Activated T-helper 1 cell treated with anti-CD3 and anti-CD28 coated beads, Interleukin-12 subunit alpha, Interleukin-12 subunit beta, Interleukin-2, Interleukin-4 antibody, amounts not matched to agents 30 ng/mL and 10 ng/mL and 1 ng/mL, durations not matched to agents 14 hours and 24 hours and 36 hours (primary cell): ENCODE measurements at regions of chrX and their contacts with region 1.

Region 1: DNA sequence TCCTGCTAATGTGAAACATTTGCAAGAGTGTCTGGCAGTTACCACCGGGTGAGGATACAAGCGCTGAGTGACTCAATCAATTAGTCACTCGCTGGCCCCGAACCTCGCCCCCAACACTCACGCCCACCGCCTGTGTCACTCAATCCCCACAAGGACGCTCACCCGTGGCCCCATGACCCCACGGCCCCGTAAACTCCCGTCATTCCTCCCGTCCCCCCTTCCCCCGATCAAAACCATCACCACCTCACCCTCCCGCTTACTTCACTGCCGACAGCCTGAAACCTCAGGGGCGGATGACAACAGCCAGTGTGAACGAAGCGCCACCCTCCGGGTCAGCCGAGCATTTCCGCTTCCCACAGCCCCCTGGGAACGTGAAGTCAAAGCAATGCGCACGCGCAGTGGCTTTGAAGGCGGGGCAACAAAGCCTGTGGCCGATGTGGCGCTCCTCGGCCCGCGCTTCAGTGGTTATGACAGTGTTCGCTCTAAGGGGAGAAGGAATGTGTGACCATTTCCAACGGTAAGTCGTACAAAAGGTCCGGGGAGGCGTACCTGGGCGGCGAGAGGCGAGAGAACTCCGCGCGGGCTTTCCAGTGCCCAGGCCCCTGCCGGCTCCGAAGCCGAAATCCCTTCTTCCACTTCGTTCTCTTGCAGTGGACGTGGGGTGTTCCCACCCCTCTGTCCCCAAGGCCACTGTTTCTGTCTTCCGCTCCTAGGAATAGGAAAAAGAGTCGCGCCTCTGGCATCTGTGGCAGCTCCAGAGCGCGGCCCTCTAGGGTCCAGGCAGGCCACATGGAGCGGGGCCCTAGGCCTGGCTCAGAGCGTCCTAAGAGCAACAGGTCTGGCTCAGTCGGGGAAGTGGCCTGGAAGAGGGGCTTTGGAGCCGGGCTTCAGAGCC is at the start of gene ZNF674:
- DNase-seq: peak; percentile 90
- H3K4me3 Mint-ChIP-seq: peak within 1 kb of the TSS; percentile 97
- H3K27ac Mint-ChIP-seq: peak within 1 kb of the TSS; percentile 97
- H3K4me1 Mint-ChIP-seq: peaks cover 36% of the 10 kb centered on the region
- H3K27me3 Mint-ChIP-seq: no peaks in the 10 kb centered on the region
- total RNA-seq, gene ZNF674: 1.8 and 3.5 TPM in 2 replicates

Region 2: GRCh38 chrX:46446727-46447378 is 98.5 kb before region 1 on chrX:
- intact Hi-C with region 1: loop called (anchors 1 kb)
- DNase-seq: peak; percentile 76
- H3K4me3 Mint-ChIP-seq: peak overlapping the region; percentile 84
- H3K27ac Mint-ChIP-seq: peak overlapping the region; percentile 92
- H3K4me1 Mint-ChIP-seq: peaks cover 25% of the 10 kb centered on the region
- H3K27me3 Mint-ChIP-seq: no peaks in the 10 kb centered on the region

Region 3: GRCh38 chrX:46587158-46587557 is 41.8 kb after region 1 on chrX:
- intact Hi-C with region 1: loop called (anchors 1 kb)
- DNase-seq: no peak
- H3K4me3 Mint-ChIP-seq: peak overlapping the region; percentile 3
- H3K27ac Mint-ChIP-seq: peak overlapping the region; percentile 70
- H3K4me1 Mint-ChIP-seq: peaks cover 25% of the 10 kb centered on the region
- H3K27me3 Mint-ChIP-seq: no peaks in the 10 kb centered on the region

Region 4: DNA sequence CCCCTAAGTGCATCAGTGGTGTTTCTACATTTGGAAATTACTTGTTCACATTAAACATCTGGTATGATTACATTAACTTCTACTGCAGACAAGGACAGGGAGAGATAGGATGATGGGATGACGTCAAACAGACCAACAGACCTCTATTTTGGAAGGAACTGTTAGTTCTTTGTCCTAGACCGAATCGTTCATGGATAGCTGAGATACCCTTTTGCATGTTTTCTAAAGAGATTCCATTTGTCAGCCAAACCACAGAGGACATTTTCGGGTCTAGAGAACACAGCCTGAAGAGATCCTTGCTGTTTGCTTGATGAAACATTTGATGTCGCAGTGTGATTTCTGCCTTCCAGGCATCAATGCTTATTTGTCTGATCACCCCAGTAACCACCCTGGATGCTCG is 55.9 kb after region 1 on chrX:
- intact Hi-C with region 1: no loop called
- DNase-seq: no peak
- H3K4me3 Mint-ChIP-seq: no peak overlapping the region
- H3K27ac Mint-ChIP-seq: no peak overlapping the region
- H3K4me1 Mint-ChIP-seq: peaks cover 15% of the 10 kb centered on the region
- H3K27me3 Mint-ChIP-seq: no peaks in the 10 kb centered on the region

Region 5: GRCh38 chrX:47129157-47129898 is 584.0 kb after region 1 on chrX:
- intact Hi-C with region 1: loop called (anchors 1 kb)
- DNase-seq: peak; percentile 86
- H3K4me3 Mint-ChIP-seq: peak overlapping the region; percentile 97
- H3K27ac Mint-ChIP-seq: peak overlapping the region; percentile 98
- H3K4me1 Mint-ChIP-seq: no peaks in the 10 kb centered on the region
- H3K27me3 Mint-ChIP-seq: no peaks in the 10 kb centered on the region